Activated T-helper 1 cell treated with anti-CD3 and anti-CD28 coated beads, Interleukin-12 subunit alpha, Interleukin-12 subunit beta, Interleukin-2, Interleukin-4 antibody, amounts not matched to agents 30 ng/mL and 10 ng/mL and 1 ng/mL, durations not matched to agents 14 hours and 24 hours and 36 hours (primary cell): ENCODE measurements at regions of chr4 and their contacts with region 1.

Region 1: DNA sequence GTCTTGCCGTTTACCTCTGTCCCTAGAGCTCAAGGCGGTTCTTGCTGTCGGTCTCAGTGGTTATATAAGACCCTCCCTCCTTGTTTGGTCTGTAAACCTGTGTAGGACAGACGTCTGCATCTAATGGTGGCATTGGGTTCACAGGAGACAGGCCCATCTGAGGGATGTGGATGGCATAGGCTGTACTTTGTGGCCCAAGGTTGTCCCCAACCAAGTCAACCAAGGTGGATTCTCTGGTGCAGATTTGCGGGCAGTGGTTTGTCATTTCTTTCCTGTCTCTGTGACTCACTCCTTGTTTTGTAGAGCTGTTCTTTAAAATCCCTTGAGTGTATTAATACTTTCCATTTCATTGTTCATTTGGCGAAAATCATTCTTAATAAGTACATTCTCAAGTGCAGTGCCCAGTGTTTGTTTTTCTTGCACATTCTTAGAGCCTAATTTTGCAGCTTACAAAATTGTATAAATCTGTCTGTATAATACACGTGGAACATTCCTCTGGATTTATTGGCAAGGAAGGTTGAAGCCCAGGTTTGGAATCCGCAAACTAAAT is 68.0 kb upstream of the TLR2 start:
- DNase-seq: peak; percentile 16
- H3K4me3 Mint-ChIP-seq: no peak overlapping the region
- H3K27ac Mint-ChIP-seq: peak overlapping the region; percentile 29
- H3K4me1 Mint-ChIP-seq: peaks cover 26% of the 10 kb centered on the region
- H3K27me3 Mint-ChIP-seq: no peaks in the 10 kb centered on the region

Region 2: DNA sequence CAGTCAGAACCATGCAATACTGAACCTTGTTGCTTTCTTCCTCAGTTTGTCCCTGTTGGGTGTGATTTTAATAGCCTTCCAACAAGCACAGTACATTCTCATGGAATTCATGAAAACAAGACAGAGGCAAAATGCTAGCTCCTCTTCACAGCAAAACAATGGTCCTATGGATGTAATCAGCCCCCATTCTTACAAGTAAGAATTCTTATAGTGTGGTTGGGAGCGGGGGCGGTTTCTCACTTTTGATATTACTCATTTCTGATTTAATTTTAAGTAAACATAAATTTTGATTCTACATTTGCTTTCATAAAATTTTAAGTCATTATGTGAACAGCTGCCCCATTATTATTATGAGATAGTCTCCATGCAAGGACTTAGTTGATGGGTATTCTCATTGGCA is 12.8 kb before region 1 on chr4:
- intact Hi-C with region 1: loop called (anchors 2 kb)
- DNase-seq: no peak
- H3K4me3 Mint-ChIP-seq: no peak overlapping the region
- H3K27ac Mint-ChIP-seq: no peak overlapping the region
- H3K4me1 Mint-ChIP-seq: peaks cover 9% of the 10 kb centered on the region
- H3K27me3 Mint-ChIP-seq: no peaks in the 10 kb centered on the region